Heart right ventricle (tissue), 16 donors: ENCODE measurements at regions of chr1 and their contacts with region 1.

Region 1: GRCh38 chr1:209827384-209828262 is at the start of gene UTP25:
- DNase-seq: peak; percentile 90 to 95
- ATAC-seq: peak; percentile 87 to 95 (median 92)
- H3K4me3 ChIP-seq: peak within 1 kb of the TSS; percentile 67 to 94 (median 72)
- H3K27ac ChIP-seq: peak within 1 kb of the TSS in 9 of 10 donors; percentile 57 to 90 (median 75)
- H3K4me1 ChIP-seq: peaks cover 0 to 35% (median 20%) of the 10 kb centered on the region in 9 donors
- H3K27me3 ChIP-seq: no peaks in the 10 kb centered on the region
- CTCF ChIP-seq: peak; percentile 56 to 86 (median 73)
- total RNA-seq, gene UTP25: 2.3 to 4.2 (median 3.4) TPM

Region 2: DNA sequence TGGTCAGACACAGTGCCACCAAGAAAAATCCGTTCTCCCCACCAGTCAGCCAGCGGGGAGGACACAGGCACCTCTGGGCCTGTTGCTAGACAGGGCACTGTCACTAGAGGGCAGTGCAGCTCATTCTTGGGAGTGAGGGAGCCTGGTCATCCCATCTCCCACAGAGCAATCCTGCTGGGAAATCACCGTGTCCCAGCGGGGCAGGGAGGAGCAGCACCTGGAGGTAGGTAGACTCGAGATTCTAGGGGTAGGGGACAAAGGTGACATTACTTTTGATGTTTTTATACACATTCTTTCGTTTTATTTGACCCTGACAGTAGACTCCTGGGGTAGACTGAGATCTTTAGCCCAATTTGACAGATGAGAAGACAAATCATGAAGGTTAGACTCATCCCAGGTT is 250.8 kb before region 1 on chr1:
- intact Hi-C with region 1: loop called in 2 of 10 experiments (anchors 5 to 10 kb)
- DNase-seq: peak; percentile 81 to 84
- ATAC-seq: peak; percentile 90 to 97 (median 94)
- H3K4me3 ChIP-seq: no peak overlapping the region
- H3K27ac ChIP-seq: no peak overlapping the region
- H3K4me1 ChIP-seq: peaks cover 0 to 5% (median 0%) of the 10 kb centered on the region in 9 donors
- H3K27me3 ChIP-seq: peaks cover 0 to 39% (median 18%) of the 10 kb centered on the region in 7 donors
- CTCF ChIP-seq: peak; percentile 81 to 98 (median 96)

Region 3: GRCh38 chr1:209784265-209785169 is 43.1 kb before region 1 on chr1 and contains the start of gene C1orf74:
- intact Hi-C with region 1: loop called in 6 of 10 experiments (anchors 2 to 5 kb)
- DNase-seq: peak; percentile 99 to 100
- ATAC-seq: peak; percentile 97 to 99 (median 98)
- H3K4me3 ChIP-seq: peak within 1 kb of the TSS; percentile 39 to 79 (median 64)
- H3K27ac ChIP-seq: peak within 1 kb of the TSS; percentile 60 to 94 (median 85)
- H3K4me1 ChIP-seq: peaks cover 0 to 60% (median 31%) of the 10 kb centered on the region in 9 donors
- H3K27me3 ChIP-seq: peaks cover 0 to 15% (median 0%) of the 10 kb centered on the region in 7 donors
- CTCF ChIP-seq: no peak
- total RNA-seq, gene C1orf74: 1.2 to 2.8 (median 1.9) TPM